ENCODE measurements at regions of chr1 and their contacts with region 1.

Region 1: DNA sequence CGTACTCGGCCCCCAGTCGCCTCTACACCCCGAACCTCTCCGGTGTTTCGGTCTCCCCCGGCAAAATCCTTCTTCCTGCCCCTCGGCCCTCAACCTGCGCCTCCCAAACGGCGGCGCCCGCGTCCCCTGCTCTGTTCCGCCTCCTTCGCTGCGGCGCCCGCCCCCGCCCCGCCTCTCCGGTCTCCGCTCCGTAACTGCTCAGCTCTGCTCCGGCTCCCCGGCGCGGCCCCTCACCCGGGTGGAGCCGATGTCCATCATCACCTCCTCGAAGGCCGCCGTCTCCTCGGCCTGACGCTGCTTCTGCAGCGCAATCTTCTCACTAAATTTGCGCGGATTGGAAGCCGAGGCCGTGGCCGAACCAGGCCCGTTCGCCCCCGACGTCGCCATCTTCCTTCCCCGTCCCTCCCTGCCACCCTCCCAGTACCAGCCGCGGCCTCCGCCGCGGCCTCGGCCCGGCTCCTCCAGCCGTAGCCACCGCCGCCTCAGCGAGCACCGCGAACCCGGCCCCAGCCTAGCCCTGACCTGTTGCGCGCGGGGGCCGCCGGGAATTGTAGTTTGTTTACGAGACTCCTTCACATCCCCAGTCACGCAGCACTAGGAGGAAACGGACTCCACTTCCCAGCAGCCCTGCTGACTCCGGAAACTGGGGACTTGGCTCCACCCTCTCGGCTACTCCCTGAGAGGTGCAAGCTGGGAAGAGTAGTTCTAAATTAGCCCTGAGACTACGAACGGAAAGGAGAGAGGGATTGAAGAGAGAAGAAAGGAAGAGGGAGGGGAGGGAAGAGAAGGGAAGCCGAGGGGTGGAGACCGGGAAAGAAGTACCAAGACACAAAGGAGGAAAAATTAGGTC is at the start of gene CRTC2:
- DNase-seq: peak; percentile 92 to 99 (median 97)
- ATAC-seq: peak; percentile 86
- H3K4me3 ChIP-seq: peak within 1 kb of the TSS; percentile 97 to 98
- H3K4me3 Mint-ChIP-seq: peak within 1 kb of the TSS; percentile 99
- H3K27ac ChIP-seq: peak within 1 kb of the TSS; percentile 82 to 93
- H3K27ac Mint-ChIP-seq: peak within 1 kb of the TSS; percentile 98
- H3K4me1 ChIP-seq: peaks cover 53% of the 10 kb centered on the region
- H3K4me1 Mint-ChIP-seq: peaks cover 65% of the 10 kb centered on the region
- H3K27me3 ChIP-seq: no peaks in the 10 kb centered on the region
- H3K27me3 Mint-ChIP-seq: no peaks in the 10 kb centered on the region
- CTCF ChIP-seq: no peak
- total RNA-seq, gene CRTC2: 169 to 201 TPM

Region 2: DNA sequence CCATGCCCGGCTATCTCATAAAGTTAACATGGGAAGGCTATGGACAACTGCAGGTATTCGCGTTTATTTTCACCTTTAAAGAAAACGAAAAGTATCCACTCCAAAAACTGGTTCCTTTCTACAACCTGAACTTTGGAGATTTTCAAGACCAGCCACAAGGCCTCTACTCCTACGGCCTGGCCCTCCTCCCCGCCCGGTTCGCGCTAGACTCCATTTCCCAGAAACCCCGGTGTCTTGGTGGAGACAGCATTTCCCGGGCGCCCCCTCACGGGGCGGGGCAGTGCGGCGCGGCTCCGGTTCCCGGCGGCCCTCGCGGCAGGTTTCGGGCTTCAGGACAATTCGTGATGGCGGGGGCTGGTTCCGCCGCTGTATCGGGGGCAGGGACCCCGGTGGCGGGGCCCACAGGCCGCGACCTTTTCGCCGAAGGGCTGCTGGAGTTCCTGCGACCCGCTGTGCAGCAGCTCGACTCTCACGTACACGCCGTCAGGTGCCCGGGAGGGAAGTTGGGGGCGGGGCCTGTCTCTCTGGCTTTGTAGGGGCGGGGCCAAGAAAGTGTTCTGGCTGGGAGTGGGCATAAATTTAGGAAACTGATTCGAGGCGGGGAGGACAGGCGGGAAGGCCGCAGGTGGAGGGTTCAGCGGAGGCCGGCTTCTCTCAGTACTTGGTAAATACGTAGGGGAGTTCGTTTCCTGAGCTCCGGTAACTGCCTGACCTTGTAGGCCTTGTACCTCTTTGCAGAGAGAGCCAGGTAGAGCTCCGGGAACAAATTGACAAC is 299.7 kb before region 1 on chr1 and contains the start of gene SNAPIN:
- CTCF ChIA-PET with region 1: no interaction called
- POLR2A ChIA-PET with region 1: no interaction called
- intact Hi-C with region 1: loop called in 1 of 2 experiments (anchors 2 kb)
- DNase-seq: peak; percentile 75 to 93 (median 88)
- ATAC-seq: peak; percentile 96
- H3K4me3 ChIP-seq: peak within 1 kb of the TSS; percentile 83 to 85
- H3K4me3 Mint-ChIP-seq: peak within 1 kb of the TSS; percentile 96
- H3K27ac ChIP-seq: peak within 1 kb of the TSS; percentile 66 to 90
- H3K27ac Mint-ChIP-seq: peak within 1 kb of the TSS; percentile 92
- H3K4me1 ChIP-seq: peaks cover 12% of the 10 kb centered on the region
- H3K4me1 Mint-ChIP-seq: peaks cover 12% of the 10 kb centered on the region
- H3K27me3 ChIP-seq: no peaks in the 10 kb centered on the region
- H3K27me3 Mint-ChIP-seq: no peaks in the 10 kb centered on the region
- CTCF ChIP-seq: no peak
- total RNA-seq, gene SNAPIN: 6.1 to 6.5 TPM

Region 3: GRCh38 chr1:153727463-153728304 is 230.7 kb before region 1 on chr1 and contains the start of gene INTS3:
- CTCF ChIA-PET with region 1: no interaction called
- POLR2A ChIA-PET with region 1: no interaction called
- intact Hi-C with region 1: loop called in 1 of 2 experiments (anchors 1 kb)
- DNase-seq: peak; percentile 97 to 100 (median 99)
- ATAC-seq: peak; percentile 98
- H3K4me3 ChIP-seq: peak within 1 kb of the TSS; percentile 86 to 93
- H3K4me3 Mint-ChIP-seq: peak within 1 kb of the TSS; percentile 93
- H3K27ac ChIP-seq: peak within 1 kb of the TSS; percentile 91 to 96
- H3K27ac Mint-ChIP-seq: peak within 1 kb of the TSS; percentile 99
- H3K4me1 ChIP-seq: peaks cover 21% of the 10 kb centered on the region
- H3K4me1 Mint-ChIP-seq: peaks cover 34% of the 10 kb centered on the region
- H3K27me3 ChIP-seq: no peaks in the 10 kb centered on the region
- H3K27me3 Mint-ChIP-seq: no peaks in the 10 kb centered on the region
- CTCF ChIP-seq: no peak
- total RNA-seq, gene INTS3: 21.6 to 23.5 TPM

Region 4: GRCh38 chr1:153783233-153784190 is 174.8 kb before region 1 on chr1:
- CTCF ChIA-PET with region 1: no interaction called
- POLR2A ChIA-PET with region 1: no interaction called
- intact Hi-C with region 1: loop called in 1 of 2 experiments (anchors 2 kb)
- DNase-seq: peak; percentile 84 to 96 (median 91)
- ATAC-seq: peak; percentile 98
- H3K4me3 ChIP-seq: peak overlapping the region; percentile 91 to 93
- H3K4me3 Mint-ChIP-seq: peak overlapping the region; percentile 88
- H3K27ac ChIP-seq: peak overlapping the region; percentile 92 to 99
- H3K27ac Mint-ChIP-seq: peak overlapping the region; percentile 95
- H3K4me1 ChIP-seq: peaks cover 12% of the 10 kb centered on the region
- H3K4me1 Mint-ChIP-seq: peaks cover 10% of the 10 kb centered on the region
- H3K27me3 ChIP-seq: no peaks in the 10 kb centered on the region
- H3K27me3 Mint-ChIP-seq: no peaks in the 10 kb centered on the region
- CTCF ChIP-seq: no peak

Region 5: DNA sequence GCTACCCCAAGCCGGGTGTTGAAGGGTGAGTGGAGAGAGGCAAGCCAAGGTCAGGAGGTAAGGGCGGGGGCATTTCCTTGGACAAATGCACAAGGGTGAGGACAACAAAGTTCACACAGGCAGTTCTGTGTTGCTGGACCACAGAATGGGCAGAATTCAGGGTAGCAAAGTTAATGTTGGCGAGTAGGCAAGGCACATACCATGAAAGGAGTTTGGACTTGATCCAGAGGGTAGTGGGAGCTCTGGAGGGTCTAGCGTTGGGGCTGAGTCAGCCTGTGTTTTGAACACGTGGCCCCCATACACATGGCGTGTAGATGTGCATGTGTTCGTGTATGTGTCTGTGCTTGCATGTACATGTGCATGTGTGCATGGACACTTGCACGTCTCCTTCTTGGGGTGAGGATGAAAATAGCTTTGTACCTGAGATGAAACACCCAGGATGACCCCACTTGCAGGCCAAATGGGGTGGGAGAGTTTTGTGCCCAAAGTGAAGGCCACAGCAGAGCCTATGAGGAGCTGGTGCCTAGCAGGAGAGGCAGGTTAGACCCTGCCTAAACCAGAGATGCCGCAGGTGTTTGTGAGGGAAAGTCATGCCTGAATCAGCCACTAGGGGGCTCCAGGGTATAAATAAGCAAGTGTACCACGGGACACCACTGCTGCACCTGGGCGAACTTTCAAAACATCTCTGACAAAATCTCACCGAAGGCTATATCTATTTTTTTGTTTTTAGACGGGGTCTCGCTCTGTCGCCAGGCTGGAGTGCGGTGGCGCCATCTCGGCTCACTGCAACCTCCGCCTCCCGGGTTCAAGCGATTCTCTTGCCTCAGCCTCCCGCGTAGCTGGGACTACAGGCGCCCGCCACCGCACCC is 161.3 kb before region 1 on chr1:
- CTCF ChIA-PET with region 1: interaction called, 15 read pairs
- POLR2A ChIA-PET with region 1: no interaction called
- intact Hi-C with region 1: no loop called
- DNase-seq: peak; percentile 73 to 90 (median 86)
- ATAC-seq: peak; percentile 98
- H3K4me3 ChIP-seq: no peak overlapping the region
- H3K4me3 Mint-ChIP-seq: no peak overlapping the region
- H3K27ac ChIP-seq: no peak overlapping the region
- H3K27ac Mint-ChIP-seq: peak overlapping the region; percentile 53
- H3K4me1 ChIP-seq: peaks cover 24% of the 10 kb centered on the region
- H3K4me1 Mint-ChIP-seq: peaks cover 19% of the 10 kb centered on the region
- H3K27me3 ChIP-seq: no peaks in the 10 kb centered on the region
- H3K27me3 Mint-ChIP-seq: no peaks in the 10 kb centered on the region
- CTCF ChIP-seq: peak; percentile 90

Region 6: DNA sequence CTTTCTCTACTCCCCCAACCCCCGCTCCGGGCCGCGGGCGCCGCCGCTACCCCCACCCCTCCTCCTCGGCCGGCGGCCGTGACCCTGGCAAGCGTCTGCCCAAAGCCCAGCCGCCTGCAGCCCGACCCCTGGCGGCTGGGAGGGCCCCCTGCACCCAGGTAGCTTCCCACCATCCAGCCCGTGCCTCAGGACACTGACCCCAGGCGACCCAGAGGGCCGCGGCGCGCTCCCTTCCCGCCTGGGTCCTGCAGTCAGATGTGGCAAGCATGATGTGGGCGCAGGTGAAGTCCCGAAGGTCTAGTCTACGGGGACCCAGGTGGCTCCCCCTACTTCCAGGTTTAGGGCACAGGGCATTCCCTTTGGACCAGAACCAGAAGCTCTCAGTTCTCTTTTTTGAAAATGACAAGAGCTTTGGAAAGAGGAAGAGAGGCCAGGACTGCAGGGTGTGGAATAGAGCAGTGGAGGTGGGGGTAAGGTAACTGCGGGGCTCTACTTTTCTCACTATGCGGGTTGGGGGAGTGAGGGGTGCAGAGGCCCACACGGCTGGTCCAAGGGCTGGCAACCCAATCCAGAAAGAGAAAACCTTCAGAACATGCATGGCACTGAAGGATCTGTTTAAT is 11.6 kb before region 1 on chr1 and contains the start of gene DENND4B:
- CTCF ChIA-PET with region 1: interaction called, 20 read pairs
- POLR2A ChIA-PET with region 1: interaction called, 39 read pairs
- intact Hi-C with region 1: loop called (anchors 1 kb)
- DNase-seq: peak; percentile 43 to 87 (median 75)
- ATAC-seq: peak; percentile 61
- H3K4me3 ChIP-seq: peak within 1 kb of the TSS; percentile 71 to 84
- H3K4me3 Mint-ChIP-seq: peak within 1 kb of the TSS; percentile 94
- H3K27ac ChIP-seq: peak within 1 kb of the TSS; percentile 81 to 95
- H3K27ac Mint-ChIP-seq: peak within 1 kb of the TSS; percentile 86
- H3K4me1 ChIP-seq: peaks cover 33% of the 10 kb centered on the region
- H3K4me1 Mint-ChIP-seq: peaks cover 25% of the 10 kb centered on the region
- H3K27me3 ChIP-seq: no peaks in the 10 kb centered on the region
- H3K27me3 Mint-ChIP-seq: no peaks in the 10 kb centered on the region
- CTCF ChIP-seq: peak; percentile 95
- total RNA-seq, gene DENND4B: 87.2 to 91.3 TPM

Region 7: GRCh38 chr1:153977250-153978240 is 19.2 kb after region 1 on chr1 and contains the start of gene JTB:
- CTCF ChIA-PET with region 1: interaction called, 14 read pairs
- POLR2A ChIA-PET with region 1: interaction called, 25 read pairs
- intact Hi-C with region 1: loop called (anchors 1 kb)
- DNase-seq: peak; percentile 62 to 91 (median 86)
- ATAC-seq: peak; percentile 95
- H3K4me3 ChIP-seq: peak within 1 kb of the TSS; percentile 92 to 97
- H3K4me3 Mint-ChIP-seq: peak within 1 kb of the TSS; percentile 97
- H3K27ac ChIP-seq: peak within 1 kb of the TSS; percentile 74 to 77
- H3K27ac Mint-ChIP-seq: peak within 1 kb of the TSS; percentile 96
- H3K4me1 ChIP-seq: peaks cover 20% of the 10 kb centered on the region
- H3K4me1 Mint-ChIP-seq: peaks cover 35% of the 10 kb centered on the region
- H3K27me3 ChIP-seq: no peaks in the 10 kb centered on the region
- H3K27me3 Mint-ChIP-seq: no peaks in the 10 kb centered on the region
- CTCF ChIP-seq: no peak
- total RNA-seq, gene JTB: 90.4 to 91.1 TPM

Region 8: GRCh38 chr1:154391086-154391770 is 432.9 kb after region 1 on chr1:
- CTCF ChIA-PET with region 1: no interaction called
- POLR2A ChIA-PET with region 1: no interaction called
- intact Hi-C with region 1: no loop called
- DNase-seq: no peak
- ATAC-seq: no peak
- H3K4me3 ChIP-seq: no peak overlapping the region
- H3K4me3 Mint-ChIP-seq: no peak overlapping the region
- H3K27ac ChIP-seq: no peak overlapping the region
- H3K27ac Mint-ChIP-seq: no peak overlapping the region
- H3K4me1 ChIP-seq: peaks cover 15% of the 10 kb centered on the region
- H3K4me1 Mint-ChIP-seq: peaks cover 23% of the 10 kb centered on the region
- H3K27me3 ChIP-seq: no peaks in the 10 kb centered on the region
- H3K27me3 Mint-ChIP-seq: no peaks in the 10 kb centered on the region
- CTCF ChIP-seq: no peak

Measured in CD8-positive, alpha-beta T cell (primary cell).